HCT116 (cell line): ENCODE measurements at regions of chr11 and their contacts with region 1.

Region 1: DNA sequence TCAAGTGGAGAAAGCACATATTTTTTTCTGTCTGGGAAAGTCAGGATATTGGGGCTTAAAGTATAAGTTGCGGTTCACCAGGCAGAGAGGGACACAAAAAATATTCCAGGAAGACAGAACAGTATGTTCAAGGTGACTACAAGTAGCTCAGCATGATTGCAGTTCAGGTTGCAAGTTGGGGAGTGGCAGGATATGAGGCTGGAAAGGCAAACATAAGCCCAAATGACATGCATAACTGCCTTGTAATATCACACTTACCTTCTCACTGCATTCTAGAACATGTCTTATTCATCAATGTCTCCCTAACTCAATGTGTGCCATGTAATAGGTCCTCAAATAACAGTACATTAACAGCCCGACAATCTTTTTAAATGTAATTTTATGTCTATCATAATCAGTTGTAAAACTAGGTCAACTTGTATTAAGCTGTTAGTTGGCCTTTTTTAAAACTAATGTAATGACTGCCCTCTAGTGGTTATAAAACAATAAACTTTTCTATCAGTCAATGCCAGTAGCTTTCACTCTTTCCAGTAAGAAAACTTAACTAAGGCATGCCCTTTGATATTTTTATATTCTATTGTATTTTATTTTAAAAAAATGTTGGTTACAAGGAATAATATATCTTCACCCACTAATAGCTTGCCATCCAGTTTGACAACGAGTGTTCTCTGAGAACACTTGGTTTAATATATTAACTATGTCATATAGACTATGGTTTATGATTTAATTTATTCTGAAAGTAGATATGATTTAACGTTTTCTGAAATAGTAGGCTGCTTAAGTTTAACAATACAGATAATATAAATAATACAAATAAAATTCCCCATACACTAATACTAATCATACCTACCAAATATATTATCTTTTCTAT is 39.4 kb upstream of the CFAP300 start:
- DNase-seq: peak; percentile 57
- ATAC-seq: peak; percentile 41; the same call in 1 of the 2 replicates
- H3K4me3 ChIP-seq: no peak overlapping the region
- H3K27ac ChIP-seq: no peak overlapping the region
- H3K4me1 ChIP-seq: peaks cover 20 to 31% of the 10 kb centered on the region in 2 experiments
- H3K27me3 ChIP-seq: no peaks in the 10 kb centered on the region
- CTCF ChIP-seq: peak; percentile 21 to 77 (median 49); a peak in 4 of 6 replicates
- POLR2A ChIP-seq: no peak
- RAD21 ChIP-seq: peak; percentile 80

Region 2: DNA sequence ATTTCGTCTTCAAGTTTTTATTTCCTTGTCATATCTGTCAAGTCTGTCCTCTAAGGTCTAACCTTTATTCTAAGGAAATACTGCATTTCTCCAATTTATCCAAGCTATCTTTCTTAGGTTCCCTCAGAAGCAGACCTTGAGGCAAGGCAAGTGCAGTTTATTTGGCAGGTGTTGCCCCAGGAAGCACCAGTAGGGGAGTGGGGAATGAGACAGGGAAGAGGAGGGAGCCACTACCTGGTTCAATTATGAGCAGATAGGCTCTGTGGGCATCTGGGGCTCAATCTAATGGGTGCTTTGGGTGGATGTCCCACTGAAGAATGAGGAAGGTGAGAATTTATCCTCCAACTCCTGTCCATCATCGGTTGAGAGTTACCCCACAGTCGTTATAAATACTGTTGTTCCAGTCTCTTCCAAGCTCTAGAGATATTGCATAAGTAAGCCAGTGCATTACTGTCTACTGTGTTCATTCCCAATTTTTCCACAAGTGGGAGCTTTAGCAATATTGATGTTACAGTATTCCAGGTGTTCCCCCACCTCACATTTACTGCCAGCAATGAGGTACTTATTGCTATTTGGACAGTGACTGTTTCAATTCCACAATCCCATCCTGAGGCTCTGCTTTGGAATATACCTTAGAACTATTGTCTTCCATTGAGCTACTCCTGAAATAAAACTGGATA is 247.9 kb before region 1 on chr11:
- CTCF ChIA-PET with region 1: interaction called, 16 read pairs
- POLR2A ChIA-PET with region 1: no interaction called
- RAD21 ChIA-PET with region 1: no interaction called
- intact Hi-C with region 1: loop called (anchors 5 kb)
- DNase-seq: peak; percentile 40
- ATAC-seq: peak; percentile 86
- H3K4me3 ChIP-seq: no peak overlapping the region
- H3K27ac ChIP-seq: no peak overlapping the region
- H3K4me1 ChIP-seq: peaks cover 9 to 22% of the 10 kb centered on the region in 2 experiments
- H3K27me3 ChIP-seq: no peaks in the 10 kb centered on the region
- CTCF ChIP-seq: peak; percentile 41 to 61 (median 54); a peak in 5 of 6 replicates
- POLR2A ChIP-seq: no peak
- RAD21 ChIP-seq: peak; percentile 63

Region 3: DNA sequence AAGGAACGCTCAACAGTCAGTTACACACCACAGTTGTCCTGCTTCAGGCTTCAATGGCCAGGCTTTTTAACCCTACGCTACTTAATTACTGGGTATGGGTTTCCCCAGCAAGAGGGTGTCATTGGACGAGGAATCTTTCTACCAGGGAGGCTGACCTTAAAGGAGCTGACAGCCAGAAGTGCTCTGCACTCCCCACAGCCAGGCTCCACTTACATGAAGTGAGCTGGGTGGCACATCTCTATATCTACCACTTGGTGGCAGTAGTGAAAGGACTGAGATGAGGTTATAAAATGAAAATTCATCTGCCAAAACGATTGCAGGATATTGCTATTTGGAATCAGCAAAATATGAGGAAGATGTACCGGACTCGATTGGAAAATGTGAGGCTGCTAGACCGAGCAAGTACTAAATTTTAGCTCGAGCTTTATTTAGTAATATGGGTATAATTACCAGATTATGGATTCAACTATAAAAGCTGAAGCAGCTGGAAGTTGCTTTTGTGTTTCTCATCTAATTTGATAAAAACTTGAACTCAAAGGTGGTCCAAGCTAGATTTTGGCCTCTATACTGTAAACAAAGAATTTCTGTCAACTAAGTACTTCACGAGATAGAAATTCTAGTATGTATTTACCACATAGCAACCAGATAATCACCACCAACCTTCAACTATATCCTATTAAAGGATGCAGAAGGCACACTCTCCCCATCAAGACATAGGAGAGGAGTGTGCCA is 146.9 kb before region 1 on chr11:
- CTCF ChIA-PET with region 1: interaction called, 195 read pairs
- POLR2A ChIA-PET with region 1: interaction called, 28 read pairs
- RAD21 ChIA-PET with region 1: interaction called, 18 to 21 read pairs
- intact Hi-C with region 1: loop called (anchors 1 kb)
- DNase-seq: peak; percentile 57
- ATAC-seq: peak; percentile 96
- H3K4me3 ChIP-seq: no peak overlapping the region
- H3K27ac ChIP-seq: no peak overlapping the region
- H3K4me1 ChIP-seq: peaks cover 0 to 38% of the 10 kb centered on the region in 2 experiments; a peak in 2 of 4 replicates
- H3K27me3 ChIP-seq: no peaks in the 10 kb centered on the region
- CTCF ChIP-seq: peak; percentile 78 to 81 (median 81)
- POLR2A ChIP-seq: no peak
- RAD21 ChIP-seq: peak; percentile 80

Region 4: DNA sequence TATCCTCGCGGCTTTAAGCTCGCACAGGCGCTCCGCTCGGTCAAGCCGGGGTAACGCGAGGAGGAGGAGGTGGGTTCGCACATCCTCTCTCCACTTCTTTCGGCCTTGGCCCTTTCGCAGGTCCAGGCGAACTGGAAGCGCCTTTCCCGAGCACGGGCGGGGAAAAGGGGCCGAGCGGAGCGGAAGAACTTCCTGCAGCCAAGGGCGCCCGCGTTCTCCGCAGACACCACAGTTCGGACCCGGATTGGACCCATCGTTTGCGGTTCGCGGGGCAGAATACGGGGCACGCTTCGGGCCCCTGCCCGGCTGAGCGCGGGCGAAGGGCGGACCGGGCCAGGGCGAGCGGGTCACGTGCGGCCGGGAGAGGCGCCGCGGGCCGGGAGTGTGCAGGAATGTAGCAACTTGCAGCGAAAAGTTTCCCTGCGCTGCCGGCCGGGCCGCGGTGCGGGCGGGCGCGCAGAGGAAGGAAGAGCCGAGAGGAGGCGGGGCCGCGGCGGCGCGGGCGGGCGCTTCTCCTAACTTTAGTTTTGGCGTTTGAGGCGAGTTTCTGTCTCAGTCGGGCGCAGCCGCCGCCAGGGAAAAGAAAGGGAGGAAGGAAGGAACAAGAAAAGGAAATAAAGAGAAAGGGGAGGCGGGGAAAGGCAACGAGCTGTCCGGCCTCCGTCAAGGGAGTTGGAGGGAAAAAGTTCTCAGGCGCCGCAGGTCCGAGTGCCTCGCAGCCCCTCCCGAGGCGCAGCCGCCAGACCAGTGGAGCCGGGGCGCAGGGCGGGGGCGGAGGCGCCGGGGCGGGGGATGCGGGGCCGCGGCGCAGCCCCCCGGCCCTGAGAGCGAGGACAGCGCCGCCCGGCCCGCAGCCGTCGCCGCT is 102.3 kb after region 1 on chr11 and contains the start of gene YAP1:
- CTCF ChIA-PET with region 1: no interaction called
- POLR2A ChIA-PET with region 1: no interaction called
- RAD21 ChIA-PET with region 1: no interaction called
- intact Hi-C with region 1: loop called (anchors 5 kb)
- DNase-seq: peak; percentile 77
- ATAC-seq: peak; percentile 56
- H3K4me3 ChIP-seq: peak within 1 kb of the TSS; percentile 82 to 83
- H3K27ac ChIP-seq: peak within 1 kb of the TSS; percentile 100
- H3K4me1 ChIP-seq: peaks cover 33 to 52% of the 10 kb centered on the region in 2 experiments
- H3K27me3 ChIP-seq: no peaks in the 10 kb centered on the region
- CTCF ChIP-seq: no peak
- POLR2A ChIP-seq: peak; percentile 37
- RAD21 ChIP-seq: 0 out of 2 replicates have a peak, but pooled peaks have one; percentile 42
- total RNA-seq, gene YAP1: 88.6 TPM

Region 5: DNA sequence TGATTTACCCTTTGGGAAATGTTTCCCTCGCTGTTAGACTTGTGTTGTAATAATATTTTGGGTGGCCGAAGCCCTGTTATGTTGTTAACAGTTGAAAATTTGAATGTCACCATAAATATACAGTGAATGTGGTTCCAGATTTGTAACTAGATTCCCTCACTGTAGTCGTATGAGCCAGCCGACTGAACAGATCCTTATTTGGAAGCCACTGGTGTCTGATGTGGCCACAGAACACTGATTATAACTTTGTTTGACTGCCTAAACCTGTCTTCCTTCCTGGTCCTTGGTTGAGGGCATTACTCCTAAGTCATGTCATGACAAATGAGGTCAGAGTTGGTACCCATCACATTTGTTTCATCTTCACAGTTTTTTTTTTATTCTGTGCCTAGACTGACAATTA is 147.9 kb after region 1 on chr11:
- CTCF ChIA-PET with region 1: no interaction called
- POLR2A ChIA-PET with region 1: no interaction called
- RAD21 ChIA-PET with region 1: no interaction called
- intact Hi-C with region 1: no loop called
- DNase-seq: no peak
- ATAC-seq: no peak
- H3K4me3 ChIP-seq: no peak overlapping the region
- H3K27ac ChIP-seq: no peak overlapping the region
- H3K4me1 ChIP-seq: peaks cover 16 to 28% of the 10 kb centered on the region in 2 experiments; a peak in 3 of 4 replicates
- H3K27me3 ChIP-seq: no peaks in the 10 kb centered on the region
- CTCF ChIP-seq: no peak
- POLR2A ChIP-seq: no peak
- RAD21 ChIP-seq: no peak

Region 6: DNA sequence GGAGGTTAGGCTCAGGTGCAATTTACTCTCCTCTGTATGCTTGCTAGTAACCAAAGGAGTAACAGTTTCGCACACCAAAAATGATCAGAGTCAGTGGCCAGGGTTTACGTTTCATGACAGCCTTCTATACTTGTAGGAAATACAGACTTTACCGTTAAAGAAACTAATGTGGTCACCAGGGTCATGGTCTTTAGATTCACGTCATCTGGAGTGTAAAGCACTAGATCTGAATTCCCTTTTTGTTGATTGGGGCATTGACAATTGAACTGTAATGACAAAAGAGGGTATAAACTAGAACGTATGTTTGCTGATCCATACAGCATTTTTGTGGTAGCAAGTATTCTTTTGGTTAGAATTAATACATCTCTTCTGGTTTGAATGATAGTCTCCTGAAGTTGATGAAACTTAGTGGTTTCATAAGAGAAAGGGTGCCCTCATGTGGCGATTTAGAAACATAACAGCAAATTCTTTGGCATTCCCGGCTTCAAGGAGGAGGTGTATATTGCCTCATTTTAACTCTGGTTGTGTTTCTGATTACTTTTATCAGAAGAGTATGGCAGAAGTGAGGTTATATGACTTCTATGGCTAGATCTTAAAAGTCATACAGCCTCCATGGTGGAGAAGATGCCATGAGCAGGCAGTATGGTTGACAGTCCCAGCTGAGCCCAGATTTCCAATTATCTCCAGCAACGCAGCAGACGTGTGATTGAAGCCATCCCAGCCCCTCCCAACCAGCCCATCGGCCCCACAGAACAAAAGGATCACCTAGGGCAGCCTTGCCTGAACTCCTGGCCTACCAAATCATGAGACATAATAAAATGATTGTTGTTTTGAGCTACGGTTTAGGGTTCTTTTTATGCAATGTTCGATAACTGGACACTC is 487.6 kb after region 1 on chr11:
- CTCF ChIA-PET with region 1: no interaction called
- POLR2A ChIA-PET with region 1: no interaction called
- RAD21 ChIA-PET with region 1: no interaction called
- intact Hi-C with region 1: loop called (anchors 10 kb)
- DNase-seq: peak; percentile 81
- ATAC-seq: peak; percentile 81
- H3K4me3 ChIP-seq: peak overlapping the region; percentile 20 to 38
- H3K27ac ChIP-seq: no peak overlapping the region
- H3K4me1 ChIP-seq: peaks cover 13 to 35% of the 10 kb centered on the region in 2 experiments
- H3K27me3 ChIP-seq: no peaks in the 10 kb centered on the region
- CTCF ChIP-seq: peak; percentile 52 to 88 (median 79)
- POLR2A ChIP-seq: no peak
- RAD21 ChIP-seq: peak; percentile 95